ENCODE measurements at regions of chr1 and their contacts with region 1.

Region 1: DNA sequence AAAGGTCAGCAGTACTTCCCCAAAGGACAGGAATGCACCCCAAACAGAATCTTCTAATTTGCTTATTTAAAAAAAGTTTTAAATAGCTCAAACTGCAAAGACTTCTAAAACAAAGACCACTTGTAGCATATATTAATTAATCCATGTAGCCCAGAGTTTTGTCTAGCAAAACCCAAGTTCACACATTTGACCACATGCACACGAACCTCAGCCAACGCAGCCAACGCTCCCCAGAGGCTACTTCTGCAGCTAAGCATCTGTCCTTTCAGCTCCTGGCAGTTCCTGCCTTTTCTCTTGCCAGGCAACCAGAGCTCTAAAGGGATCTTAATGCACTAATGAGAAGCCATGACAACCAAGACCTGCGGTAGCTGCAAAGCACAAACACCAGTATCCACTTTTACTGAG is 89.6 kb downstream of the RERE start:
- DNase-seq: no peak
- ATAC-seq: no peak; the same call in 1 of the 2 replicates
- H3K4me3 ChIP-seq: no peak overlapping the region
- H3K27ac ChIP-seq: no peak overlapping the region
- H3K4me1 ChIP-seq: peaks cover 21% of the 10 kb centered on the region
- H3K27me3 ChIP-seq: no peaks in the 10 kb centered on the region
- CTCF ChIP-seq: no peak

Region 2: DNA sequence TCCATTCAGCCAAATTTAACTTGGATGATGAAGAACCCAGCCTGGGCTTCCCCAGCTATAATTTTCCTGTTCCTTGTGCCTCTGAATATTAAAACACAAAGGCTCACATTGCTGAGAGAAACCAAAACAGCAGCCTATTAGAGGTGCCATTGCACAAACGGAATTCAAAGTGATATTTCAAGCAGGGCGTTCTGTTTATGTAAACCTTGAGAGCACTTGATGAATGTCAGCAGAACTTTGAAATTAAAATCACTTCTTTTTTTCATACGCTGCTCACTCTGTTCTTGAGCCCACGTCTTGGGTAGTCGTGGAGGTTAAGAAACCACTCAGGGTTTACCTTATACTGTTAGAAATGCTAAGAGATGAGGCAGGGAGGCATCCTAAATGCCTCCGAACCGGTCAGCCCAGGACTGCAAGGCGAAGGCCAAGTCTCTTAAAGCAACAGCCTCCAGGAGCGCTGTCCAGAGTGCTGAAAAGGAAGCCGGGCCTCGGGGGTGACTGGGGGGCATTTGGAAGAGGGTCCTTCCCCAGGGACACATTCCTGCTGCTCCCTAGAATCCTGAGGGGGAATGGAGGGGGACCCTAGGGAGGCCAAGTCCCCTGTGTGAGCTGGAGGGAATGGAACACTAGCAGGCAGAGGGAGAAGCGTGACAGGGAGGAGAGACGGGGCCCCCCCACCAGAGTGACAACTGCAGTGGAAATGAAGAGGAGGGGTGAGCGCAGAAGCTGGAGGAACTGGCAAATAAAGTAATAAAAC is 1111.6 kb before region 1 on chr1:
- CTCF ChIA-PET with region 1: no interaction called
- POLR2A ChIA-PET with region 1: no interaction called
- in situ Hi-C with region 1: no loop called
- intact Hi-C with region 1: no loop called
- DNase-seq: no peak
- ATAC-seq: 0 out of 2 replicates have a peak, but pooled peaks have one; percentile 40
- H3K4me3 ChIP-seq: no peak overlapping the region
- H3K27ac ChIP-seq: no peak overlapping the region
- H3K4me1 ChIP-seq: no peaks in the 10 kb centered on the region
- H3K27me3 ChIP-seq: peaks cover 6% of the 10 kb centered on the region
- CTCF ChIP-seq: no peak

Region 3: DNA sequence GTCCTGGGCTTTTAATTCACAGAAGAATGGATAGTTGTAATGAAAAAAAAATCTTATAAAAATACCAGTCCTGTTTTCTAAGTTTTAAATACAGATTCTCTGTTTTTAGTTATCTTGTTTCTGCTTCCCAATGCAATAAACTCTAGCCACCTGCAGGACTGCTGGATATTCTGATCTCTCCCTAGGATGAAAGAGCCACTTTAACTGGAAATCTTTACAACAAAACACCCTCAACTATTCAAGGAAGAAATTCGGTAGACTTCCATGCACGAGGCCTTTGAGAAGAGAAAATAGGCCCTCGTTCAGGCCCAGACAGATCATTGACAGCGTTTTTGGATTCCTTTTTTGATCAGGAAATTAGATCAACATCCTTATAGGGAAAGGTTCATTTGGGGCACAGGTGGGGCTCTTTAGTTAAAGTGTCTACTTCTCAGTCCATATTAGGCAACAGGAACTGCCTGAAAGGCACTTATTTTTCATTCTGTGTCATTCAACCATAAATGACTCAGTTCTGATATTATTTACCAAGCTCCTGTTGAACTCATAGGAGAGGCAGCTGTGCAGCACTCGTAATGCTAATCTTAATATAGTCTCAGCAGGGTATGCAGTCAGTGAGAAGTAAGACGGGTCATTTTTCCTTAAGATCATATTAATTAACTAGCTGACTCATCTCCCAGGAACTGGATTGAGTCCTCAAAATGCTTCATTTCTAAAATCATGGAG is 630.6 kb before region 1 on chr1:
- CTCF ChIA-PET with region 1: no interaction called
- POLR2A ChIA-PET with region 1: no interaction called
- in situ Hi-C with region 1: no loop called
- intact Hi-C with region 1: no loop called
- DNase-seq: peak; percentile 97
- ATAC-seq: peak; percentile 96
- H3K4me3 ChIP-seq: no peak overlapping the region
- H3K27ac ChIP-seq: peak overlapping the region; percentile 100
- H3K4me1 ChIP-seq: peaks cover 56% of the 10 kb centered on the region
- H3K27me3 ChIP-seq: no peaks in the 10 kb centered on the region
- CTCF ChIP-seq: no peak

Region 4: DNA sequence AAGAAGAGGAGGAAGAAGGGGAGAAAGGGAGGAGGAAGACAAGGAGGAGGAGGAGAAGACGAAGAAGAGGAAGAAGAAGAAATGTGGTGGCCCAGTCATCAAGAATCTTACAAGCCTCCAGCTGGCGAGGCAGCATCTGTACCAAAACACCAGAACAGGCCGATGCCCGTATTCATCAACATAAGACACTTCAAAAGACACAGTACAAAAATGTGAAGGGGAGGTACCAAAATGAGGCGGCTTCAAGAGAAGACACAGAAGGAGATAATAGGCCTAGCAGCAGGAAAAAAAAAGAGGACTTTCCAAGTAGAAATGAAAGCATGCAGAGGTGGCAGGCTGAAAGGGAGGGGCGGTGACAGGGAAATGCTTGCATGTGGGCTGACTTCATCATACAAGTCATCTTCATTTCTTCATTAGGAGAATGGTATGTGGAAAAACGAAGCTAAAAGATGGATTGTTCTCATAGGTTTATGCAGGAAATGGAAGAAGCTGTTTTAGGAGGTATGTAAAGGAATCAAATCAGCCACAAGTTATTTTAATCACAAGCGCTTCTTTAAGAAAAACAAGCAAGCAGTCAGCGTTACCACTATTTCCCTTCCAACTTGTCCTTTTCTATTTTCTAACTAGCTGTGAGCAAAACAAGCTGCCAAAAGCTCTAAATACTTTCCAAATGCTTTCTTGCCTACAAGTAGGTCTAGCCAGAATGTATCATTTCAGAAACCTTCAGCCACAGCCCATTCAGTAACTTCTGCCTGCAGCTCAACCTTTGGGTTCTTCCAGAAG is 217.6 kb before region 1 on chr1:
- CTCF ChIA-PET with region 1: interaction called, 13 read pairs
- POLR2A ChIA-PET with region 1: no interaction called
- in situ Hi-C with region 1: no loop called
- intact Hi-C with region 1: no loop called
- DNase-seq: no peak
- ATAC-seq: no peak
- H3K4me3 ChIP-seq: no peak overlapping the region
- H3K27ac ChIP-seq: no peak overlapping the region
- H3K4me1 ChIP-seq: no peaks in the 10 kb centered on the region
- H3K27me3 ChIP-seq: no peaks in the 10 kb centered on the region
- CTCF ChIP-seq: no peak

Region 5: DNA sequence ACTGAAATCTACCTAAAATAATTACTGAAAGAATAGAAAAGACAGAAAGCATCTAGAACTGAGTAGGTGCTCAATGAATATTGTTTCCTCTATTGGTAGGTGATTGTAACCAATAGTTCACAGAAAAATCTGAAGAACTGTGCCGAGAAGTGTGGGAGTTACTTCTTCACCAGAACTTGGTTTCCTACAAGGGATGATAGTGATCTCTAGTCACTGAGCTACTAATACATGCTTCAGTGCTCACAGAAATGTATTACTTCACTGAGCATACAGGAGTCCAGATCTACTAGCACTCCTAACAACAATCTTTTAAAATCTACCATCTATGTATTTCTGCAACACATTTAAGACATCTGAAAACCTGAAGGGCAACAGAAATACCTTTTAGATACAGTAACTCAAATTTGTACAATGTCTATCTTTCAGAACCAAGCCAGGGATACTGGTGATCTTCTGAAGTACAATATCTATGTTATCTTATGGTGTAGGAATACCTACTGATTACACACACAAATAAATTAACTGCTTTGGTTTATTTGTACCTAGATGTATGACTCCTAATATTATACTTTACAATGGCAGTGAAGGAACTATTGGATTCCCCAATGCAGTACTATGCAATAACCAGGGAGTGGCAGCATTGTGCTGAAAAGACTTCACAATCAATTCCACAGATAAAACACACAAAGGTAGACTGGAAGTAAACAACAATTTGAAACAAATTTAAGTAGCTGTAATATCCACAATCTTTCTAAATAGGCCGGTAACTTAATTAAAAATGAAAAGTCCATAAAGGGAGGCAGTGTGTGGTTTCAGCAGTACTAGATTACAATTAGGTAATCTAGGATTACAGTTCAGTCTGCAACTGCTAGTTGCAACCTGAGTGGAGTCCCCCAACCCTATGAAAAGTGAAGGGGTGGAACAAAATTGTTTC is 166.9 kb before region 1 on chr1:
- CTCF ChIA-PET with region 1: interaction called, 6 read pairs
- POLR2A ChIA-PET with region 1: no interaction called
- in situ Hi-C with region 1: no loop called
- intact Hi-C with region 1: loop called (anchors 1 kb)
- DNase-seq: no peak
- ATAC-seq: peak; percentile 80
- H3K4me3 ChIP-seq: no peak overlapping the region
- H3K27ac ChIP-seq: no peak overlapping the region
- H3K4me1 ChIP-seq: peaks cover 46% of the 10 kb centered on the region
- H3K27me3 ChIP-seq: no peaks in the 10 kb centered on the region
- CTCF ChIP-seq: peak; percentile 82; the same call in 1 of the 2 replicates

Region 6: GRCh38 chr1:8764293-8764937 is 36.6 kb after region 1 on chr1:
- CTCF ChIA-PET with region 1: interaction called, 13 read pairs
- POLR2A ChIA-PET with region 1: no interaction called
- in situ Hi-C with region 1: no loop called
- intact Hi-C with region 1: no loop called
- DNase-seq: no peak
- ATAC-seq: no peak
- H3K4me3 ChIP-seq: no peak overlapping the region
- H3K27ac ChIP-seq: no peak overlapping the region
- H3K4me1 ChIP-seq: peaks cover 5% of the 10 kb centered on the region; the same call in 1 of the 2 replicates
- H3K27me3 ChIP-seq: no peaks in the 10 kb centered on the region
- CTCF ChIP-seq: no peak